ENCODE measurements at regions of chr12 and their contacts with region 1.

Region 1: GRCh38 chr12:93002293-93003054 is 73.4 kb upstream of the EEA1 start:
- DNase-seq: no peak
- H3K4me3 ChIP-seq: no peak overlapping the region
- H3K27ac ChIP-seq: no peak overlapping the region
- H3K4me1 ChIP-seq: 0 out of 7 replicates have a peak, but pooled peaks cover 0 to 2% (median 0%) of the 10 kb centered on the region in 4 experiments
- H3K27me3 ChIP-seq: no peaks in the 10 kb centered on the region
- CTCF ChIP-seq: no peak
- EP300 ChIP-seq: no peak
- POLR2A ChIP-seq: no peak
- RAD21 ChIP-seq: no peak

Region 2: DNA sequence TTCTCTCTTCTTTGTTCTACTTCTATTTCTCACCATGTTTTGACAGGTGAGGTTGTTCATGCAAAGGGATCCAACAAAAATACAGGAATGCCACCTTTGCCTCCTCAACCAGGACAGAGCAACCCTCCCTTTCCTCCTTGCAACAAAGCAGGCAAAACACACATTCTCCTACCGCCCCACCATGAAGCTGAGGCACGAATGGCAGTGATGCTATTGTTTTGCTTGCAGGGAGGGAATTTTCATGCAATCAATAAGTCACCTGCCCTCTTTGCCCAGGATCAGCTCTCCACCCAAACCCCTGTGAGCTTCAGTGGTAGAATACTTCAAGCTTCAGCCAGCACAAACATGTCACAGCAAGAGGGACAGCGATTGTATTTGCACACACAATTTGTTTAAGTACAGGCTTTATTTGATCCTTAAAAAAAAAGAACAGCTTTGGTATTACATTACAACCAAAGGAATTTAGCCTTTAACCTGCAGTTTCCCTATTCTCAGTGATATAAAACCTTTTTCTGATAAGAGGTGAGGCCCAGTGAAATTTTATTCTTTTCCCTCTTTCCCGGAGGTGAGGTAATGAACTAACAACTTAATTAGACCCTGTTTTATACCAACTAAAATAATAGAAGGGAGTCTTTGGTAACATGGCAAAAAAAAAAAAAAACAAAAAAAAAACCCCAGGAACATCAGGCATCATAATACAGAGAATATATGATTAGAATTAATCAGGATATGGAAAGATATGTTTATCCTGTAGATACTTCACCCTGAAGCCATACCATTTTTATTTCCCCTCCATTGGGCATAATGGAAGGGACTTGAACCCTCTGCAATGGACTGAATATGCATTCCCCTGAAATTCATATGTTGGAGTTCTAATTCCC is 13.6 kb after region 1 on chr12:
- CTCF ChIA-PET with region 1: interaction called, 10 read pairs
- POLR2A ChIA-PET with region 1: no interaction called
- DNase-seq: no peak
- H3K4me3 ChIP-seq: no peak overlapping the region
- H3K27ac ChIP-seq: no peak overlapping the region
- H3K4me1 ChIP-seq: peaks cover 0 to 7% (median 4%) of the 10 kb centered on the region in 4 experiments; a peak in 4 of 7 replicates
- H3K27me3 ChIP-seq: no peaks in the 10 kb centered on the region
- CTCF ChIP-seq: no peak
- EP300 ChIP-seq: no peak
- POLR2A ChIP-seq: no peak
- RAD21 ChIP-seq: no peak

Region 3: GRCh38 chr12:93237235-93237915 is 234.9 kb after region 1 on chr12:
- CTCF ChIA-PET with region 1: no interaction called
- POLR2A ChIA-PET with region 1: no interaction called
- DNase-seq: no peak
- H3K4me3 ChIP-seq: no peak overlapping the region
- H3K27ac ChIP-seq: no peak overlapping the region
- H3K4me1 ChIP-seq: no peaks in the 10 kb centered on the region
- H3K27me3 ChIP-seq: peaks cover 0 to 1% (median 0%) of the 10 kb centered on the region in 4 experiments; a peak in 1 of 7 replicates
- CTCF ChIP-seq: no peak
- EP300 ChIP-seq: no peak
- POLR2A ChIP-seq: no peak
- RAD21 ChIP-seq: no peak